Activated B cell treated with CpG ODN at 0.5 μM for 24 hours (primary cell): ENCODE measurements at regions of chr6 and their contacts with region 1.

Region 1: GRCh38 chr6:32432050-32432450 is 7.6 kb upstream of the HLA-DRA start:
- DNase-seq: no peak
- ATAC-seq: peak; percentile 43
- H3K4me3 Mint-ChIP-seq: no peak overlapping the region
- H3K27ac Mint-ChIP-seq: peak overlapping the region; percentile 24
- H3K4me1 Mint-ChIP-seq: peaks cover 33% of the 10 kb centered on the region
- H3K27me3 Mint-ChIP-seq: no peaks in the 10 kb centered on the region
- CTCF ChIP-seq: peak; percentile 65

Region 2: GRCh38 chr6:32692019-32692418 is 260.0 kb after region 1 on chr6:
- CTCF ChIA-PET with region 1: interaction called, 26 read pairs
- POLR2A ChIA-PET with region 1: interaction called, 90 read pairs
- intact Hi-C with region 1: loop called (anchors 1 kb)
- DNase-seq: no peak
- ATAC-seq: peak; percentile 49
- H3K4me3 Mint-ChIP-seq: peak overlapping the region; percentile 3
- H3K27ac Mint-ChIP-seq: peak overlapping the region; percentile 85
- H3K4me1 Mint-ChIP-seq: peaks cover 54% of the 10 kb centered on the region
- H3K27me3 Mint-ChIP-seq: no peaks in the 10 kb centered on the region
- CTCF ChIP-seq: no peak